Mucosa of descending colon (tissue), 3 donors: ENCODE measurements at regions of chr9 and their contacts with region 1.

Region 1: DNA sequence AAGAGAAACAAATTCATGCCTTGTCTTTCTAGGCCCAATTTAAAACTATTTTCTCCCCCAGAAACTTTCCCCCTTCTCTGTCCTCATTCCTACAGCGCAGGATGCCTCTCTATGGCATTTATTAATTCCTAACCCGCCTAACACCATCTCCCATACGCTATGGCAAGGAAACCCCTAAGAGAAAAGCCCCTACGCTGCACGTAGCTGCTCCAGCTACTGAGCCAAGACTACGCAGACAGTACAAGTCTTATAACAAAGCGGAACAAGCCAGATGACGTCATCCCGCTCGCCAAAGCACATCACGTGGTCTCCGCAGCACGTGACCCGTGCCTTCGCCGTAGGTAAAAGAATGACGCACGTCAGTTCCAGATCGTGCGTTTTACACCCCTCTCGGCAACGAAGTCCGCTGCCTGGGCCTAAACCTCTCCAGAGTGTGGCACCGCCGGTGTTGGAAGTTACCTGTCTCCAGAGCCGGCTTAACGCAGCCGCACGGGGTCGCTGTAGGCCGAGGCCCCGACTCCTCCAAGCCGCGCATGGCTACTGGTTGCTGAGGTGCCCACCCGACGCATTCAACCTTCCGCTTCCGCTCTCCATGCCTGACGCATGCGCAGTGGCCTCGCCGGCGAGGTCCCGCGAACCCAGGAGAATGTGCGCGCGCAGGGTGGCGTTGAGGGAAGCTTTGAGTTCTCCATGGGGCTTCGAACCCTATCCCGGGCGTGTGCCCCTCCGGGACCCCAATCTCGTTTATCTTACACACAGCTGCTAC is at the start of gene TRMO:
- DNase-seq: peak; percentile 98 to 100 (median 99)
- ATAC-seq: peak; percentile 95
- H3K4me3 ChIP-seq: peak within 1 kb of the TSS; percentile 29
- H3K4me1 ChIP-seq: peaks cover 3% of the 10 kb centered on the region
- CTCF ChIP-seq: peak; percentile 30
- total RNA-seq, gene TRMO: 14.9 to 15.3 (median 14.9) TPM

Region 2: GRCh38 chr9:97811527-97812246 is 110.5 kb before region 1 on chr9:
- intact Hi-C with region 1: no loop called
- DNase-seq: no peak
- ATAC-seq: no peak
- H3K4me3 ChIP-seq: no peak overlapping the region
- H3K4me1 ChIP-seq: no peaks in the 10 kb centered on the region
- CTCF ChIP-seq: no peak

Region 3: DNA sequence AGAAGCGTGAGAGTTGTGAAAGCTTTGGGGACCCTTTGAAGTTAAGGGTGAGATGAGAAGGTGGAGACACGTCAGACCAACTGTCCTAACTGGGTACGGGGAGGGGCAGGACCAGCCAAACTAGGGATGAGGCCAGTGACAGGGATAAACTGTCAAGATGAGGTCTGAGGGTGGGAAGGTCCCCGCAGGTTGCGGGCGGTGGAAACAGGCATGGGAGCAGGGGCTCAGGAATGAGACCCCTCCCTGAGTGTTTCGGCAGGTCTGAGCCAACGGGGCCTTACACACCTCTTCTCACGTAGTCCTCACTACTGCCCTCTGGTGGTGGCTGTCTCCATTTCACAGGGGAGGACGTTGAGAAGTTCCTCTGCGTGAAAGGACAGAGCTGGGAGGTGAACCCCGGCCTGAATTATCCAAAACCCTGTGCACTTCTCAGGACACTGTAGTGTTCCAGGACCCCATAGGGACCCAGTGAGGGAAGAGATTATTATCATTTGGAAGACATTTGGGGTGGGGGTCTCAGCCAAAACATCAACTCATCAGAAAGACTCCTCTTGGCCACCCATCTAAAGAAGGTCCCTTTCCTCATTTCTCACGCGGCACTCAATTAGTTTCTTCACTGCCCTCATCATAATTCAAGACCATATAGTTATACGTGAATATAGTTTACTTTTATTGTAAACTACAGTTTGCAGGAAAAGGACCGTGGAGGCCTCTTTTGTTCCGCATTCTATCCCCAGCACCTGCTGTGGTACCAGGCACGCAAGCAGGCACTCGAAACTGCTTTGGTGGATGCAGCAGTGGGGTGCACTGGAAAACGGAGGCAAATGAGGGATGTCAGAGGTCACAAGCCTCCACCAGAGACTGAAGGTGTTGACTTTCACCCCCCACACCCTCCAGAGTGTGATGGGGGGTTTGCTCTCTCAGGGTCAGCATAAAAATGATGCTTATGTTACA is 112.7 kb after region 1 on chr9:
- intact Hi-C with region 1: loop called in 1 of 2 experiments (anchors 10 kb)
- DNase-seq: peak; percentile 77 to 96 (median 83)
- ATAC-seq: peak; percentile 95
- H3K4me3 ChIP-seq: no peak overlapping the region
- H3K4me1 ChIP-seq: peaks cover 11% of the 10 kb centered on the region
- CTCF ChIP-seq: peak; percentile 75

Region 4: DNA sequence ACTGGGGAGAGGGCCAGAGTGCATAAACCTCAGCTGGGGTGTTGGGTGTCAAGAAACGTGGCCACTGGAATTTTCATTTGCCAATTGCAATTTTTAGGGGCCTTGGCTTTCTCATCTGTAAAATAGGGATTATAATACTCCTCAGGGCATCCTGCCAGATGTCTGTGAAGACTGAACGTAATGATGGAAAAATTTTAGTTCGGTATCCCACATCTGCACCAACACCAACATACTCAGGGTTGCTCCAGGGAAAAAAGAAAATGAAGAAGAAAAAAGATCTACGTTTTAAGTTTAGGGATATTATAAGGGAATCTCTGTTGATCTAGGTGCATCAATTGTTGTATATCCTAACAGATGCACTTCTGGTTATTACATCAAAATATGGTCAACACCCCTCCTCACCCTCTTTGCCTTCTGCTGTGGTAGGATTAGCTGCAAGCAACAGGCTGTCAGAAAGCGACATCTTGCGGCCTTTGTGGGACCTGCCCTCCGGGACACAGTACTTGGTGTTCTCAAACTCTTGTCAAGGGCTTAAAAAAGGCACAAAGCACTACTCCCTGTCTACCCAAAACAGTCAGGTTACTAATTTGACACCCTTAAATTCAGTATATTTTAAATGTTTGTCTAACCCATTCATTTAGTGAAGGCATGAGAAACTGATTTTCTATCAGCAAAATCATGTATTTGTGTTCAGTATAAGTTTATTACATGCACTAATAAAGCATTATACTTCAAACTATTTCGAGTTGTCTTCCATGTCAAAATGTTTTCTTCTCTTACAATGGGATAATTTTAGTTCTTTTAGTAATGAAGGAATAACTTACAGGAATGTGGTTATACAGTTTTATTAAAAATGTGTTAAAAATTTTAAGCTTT is 341.6 kb after region 1 on chr9:
- intact Hi-C with region 1: loop called in 1 of 2 experiments (anchors 10 kb)
- DNase-seq: peak; percentile 77 to 91 (median 87)
- ATAC-seq: peak; percentile 94
- H3K4me3 ChIP-seq: no peak overlapping the region
- H3K4me1 ChIP-seq: no peaks in the 10 kb centered on the region
- CTCF ChIP-seq: peak; percentile 86